ENCODE measurements at regions of chr1 and their contacts with region 1.

Region 1: DNA sequence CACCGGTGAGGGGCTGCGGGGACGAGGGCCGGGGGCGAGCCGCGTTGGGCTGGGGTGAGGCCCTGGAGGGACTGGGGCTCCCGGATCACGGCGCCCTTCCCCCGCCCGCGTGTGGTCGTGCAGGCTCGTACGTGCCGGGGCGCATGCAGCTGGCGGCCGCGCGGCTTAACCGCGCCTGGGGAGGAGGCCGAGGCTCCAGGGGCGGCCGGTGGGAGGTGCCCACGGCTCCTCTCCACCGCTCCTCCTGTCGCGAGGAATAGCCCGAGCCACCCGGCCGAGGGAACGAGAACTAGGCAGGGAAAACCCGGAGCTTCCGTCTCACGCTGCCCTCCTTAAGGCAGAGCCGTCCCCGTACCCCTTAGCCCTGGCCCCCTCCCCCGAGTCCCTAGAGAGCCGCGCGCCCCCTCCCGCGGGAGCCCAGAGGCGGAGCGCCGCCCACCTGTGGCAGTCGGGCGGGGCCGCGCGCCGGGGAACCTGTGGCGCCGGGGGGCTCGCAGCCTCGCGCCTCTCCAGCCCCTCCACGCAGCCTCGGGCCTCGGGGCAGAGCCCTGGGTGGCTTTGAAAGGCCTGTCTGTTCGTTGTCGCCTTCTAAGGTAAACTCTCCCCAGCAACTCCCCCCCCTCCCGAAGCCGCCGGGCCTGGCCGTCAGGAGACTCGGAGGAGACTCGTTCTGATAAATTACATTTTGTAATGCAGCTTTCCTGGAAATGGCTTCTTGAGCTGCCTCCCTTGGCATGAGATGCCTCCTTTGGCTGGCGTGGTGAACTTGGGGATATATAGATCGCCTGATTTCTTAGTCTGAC is 746 bp downstream of the AK4 start:
- DNase-seq: no peak
- ATAC-seq: peak; percentile 41
- H3K4me3 ChIP-seq: peak overlapping the region; percentile 75 to 90 (median 86)
- H3K27ac ChIP-seq: peak overlapping the region; percentile 78
- H3K4me1 ChIP-seq: peaks cover 69% of the 10 kb centered on the region
- H3K27me3 ChIP-seq: no peaks in the 10 kb centered on the region; a peak in 1 of 5 replicates
- CTCF ChIP-seq: 0 out of 2 replicates have a peak, but pooled peaks have one; percentile 3
- EP300 ChIP-seq: no peak
- POLR2A ChIP-seq: peak in 1 of 2 experiments; percentile 49; a peak in 2 of 4 replicates
- RAD21 ChIP-seq: no peak; the same call in 1 of the 2 replicates

Region 2: DNA sequence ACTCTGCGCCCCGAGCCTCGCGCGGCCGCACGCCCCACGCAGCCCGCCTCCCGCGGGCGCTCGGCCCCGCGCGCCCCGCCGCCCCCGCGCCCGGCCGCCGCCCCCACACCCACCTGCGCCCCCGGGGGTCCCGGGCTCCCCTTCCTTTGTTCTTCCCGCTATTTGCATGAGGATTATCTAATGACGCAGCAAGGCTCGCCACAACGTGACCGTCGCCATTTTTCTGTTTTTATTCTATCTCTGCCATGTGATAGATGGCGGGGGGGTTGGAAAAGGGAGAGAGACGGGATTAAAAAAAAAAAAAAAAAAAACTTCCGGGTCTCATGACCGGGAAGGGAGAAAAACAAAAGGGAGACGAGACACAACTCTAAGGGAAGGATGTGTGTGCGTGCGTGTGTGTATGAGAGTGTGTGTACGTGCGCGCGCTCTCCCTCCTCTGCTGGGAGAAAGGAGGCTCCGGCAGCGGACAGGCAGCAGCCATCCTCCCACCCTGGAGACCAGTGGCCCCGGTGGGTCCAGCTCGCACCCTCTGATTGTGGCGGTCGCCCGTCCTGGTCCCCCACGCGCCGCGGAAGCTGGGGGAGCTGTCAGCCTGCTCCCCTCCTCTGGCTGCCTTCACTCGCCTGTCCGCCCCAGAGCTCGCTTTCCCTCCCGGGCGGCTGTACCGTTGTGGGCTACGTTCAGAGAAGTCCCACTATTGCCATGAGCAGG is 81.1 kb before region 1 on chr1:
- CTCF ChIA-PET with region 1: no interaction called
- POLR2A ChIA-PET with region 1: no interaction called
- in situ Hi-C with region 1: loop called (anchors 5 kb)
- intact Hi-C with region 1: no loop called
- DNase-seq: peak; percentile 29
- ATAC-seq: peak; percentile 49
- H3K4me3 ChIP-seq: peak overlapping the region; percentile 64 to 84 (median 74)
- H3K27ac ChIP-seq: peak overlapping the region; percentile 26
- H3K4me1 ChIP-seq: peaks cover 14% of the 10 kb centered on the region; the same call in 1 of the 2 replicates
- H3K27me3 ChIP-seq: peaks cover 0 to 8% of the 10 kb centered on the region in 2 experiments; a peak in 2 of 5 replicates
- CTCF ChIP-seq: no peak
- EP300 ChIP-seq: no peak
- POLR2A ChIP-seq: peak in 1 of 2 experiments; percentile 54; a peak in 2 of 4 replicates
- RAD21 ChIP-seq: no peak

Region 3: DNA sequence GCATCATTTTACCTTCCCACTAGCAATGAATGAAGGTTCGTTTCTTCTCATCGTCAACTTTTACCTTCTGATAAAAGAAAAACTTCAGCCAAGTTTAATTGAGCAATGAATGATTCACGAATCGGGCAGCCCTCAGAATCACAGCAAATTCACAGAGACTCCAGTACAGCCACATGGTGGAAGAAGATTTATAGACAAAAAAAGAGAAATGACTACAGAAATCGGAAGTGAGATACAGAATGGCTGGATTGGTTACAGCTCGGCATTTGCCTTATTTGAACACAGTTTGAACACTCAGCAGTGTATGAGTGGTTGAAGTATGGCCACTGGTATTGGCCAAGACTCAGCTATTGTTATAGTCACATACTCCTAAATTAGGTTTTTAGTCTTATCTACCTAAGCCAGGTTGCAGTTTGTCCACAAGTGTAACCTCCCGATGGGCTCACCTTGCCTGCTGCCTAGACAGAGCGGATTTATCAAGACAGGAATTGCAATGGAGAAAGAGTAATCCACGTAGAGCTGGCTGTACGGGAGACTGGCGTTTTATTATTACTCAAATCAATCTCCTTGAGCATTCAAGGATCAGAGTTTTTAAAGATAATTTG is 14.6 kb after region 1 on chr1:
- CTCF ChIA-PET with region 1: no interaction called
- POLR2A ChIA-PET with region 1: interaction called, 37 read pairs
- in situ Hi-C with region 1: no loop called
- intact Hi-C with region 1: loop called (anchors 1 kb)
- DNase-seq: no peak
- ATAC-seq: no peak
- H3K4me3 ChIP-seq: no peak overlapping the region
- H3K27ac ChIP-seq: no peak overlapping the region
- H3K4me1 ChIP-seq: peaks cover 100% of the 10 kb centered on the region
- H3K27me3 ChIP-seq: no peaks in the 10 kb centered on the region
- CTCF ChIP-seq: no peak
- EP300 ChIP-seq: no peak
- POLR2A ChIP-seq: no peak
- RAD21 ChIP-seq: no peak

Region 4: DNA sequence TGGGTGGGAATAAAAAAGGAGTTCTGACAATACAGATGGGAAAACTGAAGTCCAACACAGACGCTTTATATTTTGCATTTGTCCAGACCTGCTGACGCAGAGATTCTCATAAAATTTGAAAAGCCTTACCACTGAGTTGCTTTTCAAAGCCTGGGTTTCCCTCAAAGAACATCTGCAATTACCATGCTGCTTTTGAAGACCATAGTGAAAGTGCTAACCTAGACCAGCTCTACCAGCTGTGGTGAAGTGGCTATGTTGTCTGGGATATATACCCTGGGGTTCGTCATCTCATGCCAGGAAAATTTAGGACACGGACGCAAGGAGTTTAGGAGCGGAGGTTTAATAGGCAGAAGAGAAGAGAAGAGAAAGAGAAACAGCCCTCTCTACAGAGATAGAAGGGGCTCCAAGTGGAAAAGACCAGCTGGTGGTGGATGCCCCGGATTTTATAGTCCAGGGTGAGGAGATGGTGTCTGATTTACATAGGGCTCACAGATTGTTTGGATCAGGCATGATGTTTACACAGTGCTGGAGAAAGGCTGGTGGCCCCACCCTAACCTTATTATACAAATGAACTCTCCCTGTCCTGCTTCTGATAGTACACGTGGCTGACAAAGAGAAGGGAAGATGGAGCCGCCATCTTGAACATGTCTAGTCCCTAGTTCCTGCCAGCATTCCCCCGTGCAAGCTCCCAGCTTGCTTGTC is 73.0 kb after region 1 on chr1:
- CTCF ChIA-PET with region 1: no interaction called
- POLR2A ChIA-PET with region 1: no interaction called
- in situ Hi-C with region 1: no loop called
- intact Hi-C with region 1: no loop called
- DNase-seq: no peak
- ATAC-seq: no peak
- H3K4me3 ChIP-seq: no peak overlapping the region
- H3K27ac ChIP-seq: no peak overlapping the region
- H3K4me1 ChIP-seq: no peaks in the 10 kb centered on the region
- H3K27me3 ChIP-seq: no peaks in the 10 kb centered on the region
- CTCF ChIP-seq: no peak
- EP300 ChIP-seq: no peak
- POLR2A ChIP-seq: no peak
- RAD21 ChIP-seq: no peak

Measured in HepG2 (cell line).